Heart left ventricle (tissue), 16 donors: ENCODE measurements at regions of chr11 and their contacts with region 1.

Region 1: DNA sequence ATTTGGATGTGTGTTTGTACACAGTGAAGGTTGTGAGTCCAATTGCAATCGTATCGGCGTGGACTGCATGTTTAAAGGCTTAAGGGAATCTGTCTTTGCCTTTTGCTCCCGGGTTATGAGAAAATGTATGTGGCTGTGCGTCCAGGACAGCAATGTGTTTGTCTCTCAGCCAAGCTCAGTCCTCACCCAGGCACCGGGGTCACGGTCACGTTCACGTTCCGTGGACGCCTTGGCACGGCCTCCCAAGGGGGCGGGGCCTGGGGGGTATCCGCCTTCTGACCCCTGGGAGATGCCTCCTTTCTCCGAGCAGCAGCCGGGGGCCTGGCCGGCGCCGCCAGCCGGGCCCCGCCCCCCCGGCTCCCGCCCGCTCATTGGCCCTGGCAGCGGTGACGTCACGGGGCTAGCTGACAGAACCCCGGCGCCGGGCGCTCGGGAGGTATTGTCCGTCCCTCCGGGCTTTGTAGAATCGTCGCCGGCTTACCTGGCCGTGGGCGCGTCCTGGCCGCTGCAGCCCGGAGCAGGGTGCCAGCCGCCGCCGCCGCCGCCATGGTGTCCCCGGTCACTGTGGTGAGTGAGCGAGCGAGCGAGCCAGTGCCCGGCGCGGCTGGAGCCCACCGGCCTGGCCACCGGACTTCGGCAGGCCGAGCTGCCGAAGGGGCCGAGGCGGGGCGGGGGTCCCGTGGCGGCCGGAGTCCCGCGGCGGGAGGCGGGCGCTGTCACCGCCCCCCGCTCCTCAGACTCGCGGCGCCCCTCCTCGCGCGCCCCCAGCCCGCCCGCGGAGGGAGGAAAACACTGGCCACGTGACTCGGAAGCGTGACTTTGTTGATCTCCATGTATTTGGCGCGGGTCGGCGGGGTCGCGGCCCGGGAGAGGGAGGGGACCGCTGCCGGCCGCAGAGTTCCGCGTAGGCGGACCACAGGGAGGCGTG is at the start of gene TMEM86A:
- DNase-seq: peak; percentile 94 to 98 (median 95)
- ATAC-seq: peak; percentile 79 to 96 (median 91)
- H3K4me3 ChIP-seq: peak within 1 kb of the TSS; percentile 64 to 97 (median 86)
- H3K27ac ChIP-seq: peak within 1 kb of the TSS; percentile 38 to 97 (median 87)
- H3K4me1 ChIP-seq: peaks cover 0 to 37% (median 21%) of the 10 kb centered on the region in 12 donors
- H3K27me3 ChIP-seq: no peaks in the 10 kb centered on the region
- CTCF ChIP-seq: no peak
- POLR2A ChIP-seq: peak; percentile 84 to 87
- total RNA-seq, gene TMEM86A: 2.3 to 13.1 (median 4.9) TPM

Region 2: GRCh38 chr11:18526521-18527296 is 171.9 kb before region 1 on chr11 and contains the start of gene TSG101:
- intact Hi-C with region 1: loop called in 1 of 10 experiments (anchors 2 kb)
- DNase-seq: peak; percentile 94 to 97 (median 97)
- ATAC-seq: peak; percentile 99
- H3K4me3 ChIP-seq: peak within 1 kb of the TSS; percentile 48 to 96 (median 90)
- H3K27ac ChIP-seq: peak within 1 kb of the TSS; percentile 83 to 98 (median 94)
- H3K4me1 ChIP-seq: peaks cover 0 to 39% (median 16%) of the 10 kb centered on the region in 12 donors
- H3K27me3 ChIP-seq: no peaks in the 10 kb centered on the region
- CTCF ChIP-seq: no peak
- POLR2A ChIP-seq: peak; percentile 7 to 87
- total RNA-seq, gene TSG101: 58.6 to 156 (median 69.1) TPM